Gastrocnemius medialis (tissue), 4 donors: ENCODE measurements at regions of chr11 and their contacts with region 1.

Region 1: DNA sequence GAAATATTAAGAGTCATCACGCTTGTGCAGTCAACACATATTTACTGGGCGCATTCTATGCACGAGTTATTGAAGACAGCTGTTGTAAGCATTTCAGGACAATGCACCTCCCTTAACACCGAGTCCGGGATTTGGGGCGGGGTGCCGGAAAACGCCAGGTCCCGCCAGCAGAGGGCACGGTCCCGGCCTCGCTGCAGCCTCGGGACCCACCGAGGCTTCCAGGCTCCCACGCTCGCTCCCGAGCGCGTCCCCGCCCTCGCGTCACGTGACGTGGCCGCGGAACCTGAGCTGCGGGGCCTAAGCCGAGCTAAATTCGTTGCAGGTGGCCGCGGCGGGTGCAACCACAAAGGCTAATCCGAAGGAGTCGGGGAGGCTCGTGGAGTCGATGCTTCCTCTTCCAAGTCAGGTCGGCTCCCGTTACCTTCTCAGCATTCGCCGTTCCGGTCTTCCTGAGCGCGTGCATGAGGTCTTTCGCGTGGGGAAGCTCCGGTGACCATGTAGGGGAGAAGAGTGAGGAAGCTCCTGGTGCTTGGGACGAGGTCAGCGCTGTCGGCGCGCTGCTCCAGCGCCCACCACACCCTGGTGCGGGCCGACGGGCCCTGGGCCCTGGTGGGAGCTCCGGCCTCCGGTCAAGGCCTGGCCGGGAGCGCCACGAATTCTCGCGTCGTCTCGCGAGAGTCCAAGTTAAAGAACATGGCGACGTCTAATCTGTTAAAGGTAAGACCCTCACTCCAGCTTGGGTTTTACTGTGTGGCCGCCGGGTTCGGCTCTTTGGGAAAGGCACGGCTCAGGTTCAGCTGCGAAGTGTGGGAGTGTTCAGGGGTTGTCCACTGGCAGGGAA is at the start of gene CUL5:
- DNase-seq: peak; percentile 83 to 90
- ATAC-seq: peak; percentile 90 to 92
- H3K4me3 ChIP-seq: peak within 1 kb of the TSS; percentile 94 to 97 (median 96)
- H3K27ac ChIP-seq: peak within 1 kb of the TSS; percentile 95 to 98 (median 96)
- H3K4me1 ChIP-seq: peaks cover 36 to 44% of the 10 kb centered on the region in 2 donors
- H3K27me3 ChIP-seq: no peaks in the 10 kb centered on the region
- CTCF ChIP-seq: peak; percentile 92 to 97 (median 94)
- POLR2A ChIP-seq: peak; percentile 56 to 62
- total RNA-seq, gene CUL5: 40.6 to 83.5 (median 66.5) TPM

Region 2: GRCh38 chr11:107858217-107859070 is 150.4 kb before region 1 on chr11 and contains the start of gene SLC35F2:
- in situ Hi-C with region 1: no loop called
- intact Hi-C with region 1: loop called (anchors 1 kb)
- DNase-seq: peak in 1 of 2 donors; percentile 13
- ATAC-seq: peak; percentile 78 to 81
- H3K4me3 ChIP-seq: peak within 1 kb of the TSS; percentile 53 to 69 (median 63)
- H3K27ac ChIP-seq: peak within 1 kb of the TSS; percentile 6 to 51 (median 36)
- H3K4me1 ChIP-seq: peaks cover 0 to 22% of the 10 kb centered on the region in 2 donors
- H3K27me3 ChIP-seq: no peaks in the 10 kb centered on the region
- CTCF ChIP-seq: no peak
- POLR2A ChIP-seq: no peak
- total RNA-seq, gene SLC35F2: 1.3 to 5.4 (median 1.7) TPM

Region 3: GRCh38 chr11:108037636-108038035 is 28.8 kb after region 1 on chr11:
- in situ Hi-C with region 1: no loop called
- intact Hi-C with region 1: loop called (anchors 1 kb)
- DNase-seq: no peak
- ATAC-seq: no peak
- H3K4me3 ChIP-seq: no peak overlapping the region
- H3K27ac ChIP-seq: peak overlapping the region; percentile 67 to 81 (median 72)
- H3K4me1 ChIP-seq: peaks cover 41 to 43% of the 10 kb centered on the region in 2 donors
- H3K27me3 ChIP-seq: no peaks in the 10 kb centered on the region
- CTCF ChIP-seq: no peak
- POLR2A ChIP-seq: no peak

Region 4: GRCh38 chr11:108115500-108116140 is 106.7 kb after region 1 on chr11:
- in situ Hi-C with region 1: no loop called
- intact Hi-C with region 1: loop called (anchors 1 kb)
- DNase-seq: peak; percentile 64 to 93
- ATAC-seq: peak; percentile 86 to 89
- H3K4me3 ChIP-seq: no peak overlapping the region
- H3K27ac ChIP-seq: peak overlapping the region; percentile 83 to 92 (median 89)
- H3K4me1 ChIP-seq: peaks cover 17 to 37% of the 10 kb centered on the region in 2 donors
- H3K27me3 ChIP-seq: no peaks in the 10 kb centered on the region
- CTCF ChIP-seq: no peak
- POLR2A ChIP-seq: no peak

Region 5: GRCh38 chr11:108121274-108122155 is 112.6 kb after region 1 on chr11 and contains the start of gene ACAT1:
- in situ Hi-C with region 1: no loop called
- intact Hi-C with region 1: loop called (anchors 2 kb)
- DNase-seq: peak; percentile 96 to 99
- ATAC-seq: peak; percentile 72 to 82
- H3K4me3 ChIP-seq: peak within 1 kb of the TSS; percentile 63 to 84 (median 76)
- H3K27ac ChIP-seq: peak within 1 kb of the TSS; percentile 89 to 99 (median 93)
- H3K4me1 ChIP-seq: peaks cover 34 to 42% of the 10 kb centered on the region in 2 donors
- H3K27me3 ChIP-seq: no peaks in the 10 kb centered on the region
- CTCF ChIP-seq: peak; percentile 39 to 84 (median 60)
- POLR2A ChIP-seq: peak; percentile 98
- total RNA-seq, gene ACAT1: 288 to 950 (median 605) TPM

Region 6: DNA sequence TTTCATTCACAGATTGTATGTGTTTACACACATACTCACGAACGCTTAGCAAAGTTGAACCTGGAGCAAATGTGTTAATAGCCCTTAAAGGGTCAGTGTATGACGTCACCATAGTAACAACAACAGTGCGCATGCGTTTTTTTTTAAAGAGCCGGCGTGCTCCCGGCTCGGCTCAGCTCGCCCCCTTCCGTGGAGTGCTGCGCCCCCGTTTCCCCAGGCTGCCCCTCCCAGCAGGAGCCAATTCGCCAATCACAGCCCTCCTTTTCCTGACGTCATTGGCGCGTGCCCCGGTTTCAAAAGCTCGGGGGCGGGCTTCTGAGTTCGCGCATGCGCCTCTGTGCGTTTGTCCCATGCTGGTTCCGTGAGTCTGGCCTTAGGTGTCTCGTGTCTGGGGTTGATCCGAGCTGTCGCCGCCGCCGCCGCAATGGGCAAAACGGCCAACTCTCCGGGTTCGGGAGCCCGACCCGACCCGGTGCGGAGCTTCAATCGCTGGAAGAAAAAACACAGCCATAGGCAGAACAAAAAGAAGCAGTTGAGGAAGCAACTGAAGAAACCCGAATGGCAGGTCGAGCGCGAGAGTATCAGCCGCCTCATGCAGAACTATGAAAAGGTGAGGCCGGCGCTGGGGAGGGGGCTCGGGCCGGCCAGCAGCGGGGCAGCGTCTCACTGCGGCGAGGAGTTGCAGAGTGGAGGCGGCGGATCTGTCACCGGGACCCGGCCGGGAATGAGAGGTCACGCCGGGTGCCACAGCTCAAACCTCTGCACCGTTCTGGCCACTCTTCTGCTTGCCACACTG is 656.1 kb after region 1 on chr11 and contains the start of gene DDX10:
- in situ Hi-C with region 1: loop called in 1 of 4 experiments (anchors 25 kb)
- intact Hi-C with region 1: loop called (anchors 10 kb)
- DNase-seq: peak; percentile 98
- ATAC-seq: peak; percentile 98
- H3K4me3 ChIP-seq: peak within 1 kb of the TSS; percentile 67 to 88 (median 74)
- H3K27ac ChIP-seq: peak within 1 kb of the TSS; percentile 80 to 89 (median 82)
- H3K4me1 ChIP-seq: peaks cover 20 to 23% of the 10 kb centered on the region in 2 donors
- H3K27me3 ChIP-seq: no peaks in the 10 kb centered on the region
- CTCF ChIP-seq: peak in 3 of 5 experiments; percentile 8 to 26 (median 20)
- POLR2A ChIP-seq: peak; percentile 65 to 82
- total RNA-seq, gene DDX10: 5.0 to 15.0 (median 10.5) TPM